ENCODE measurements at regions of chr9 and their contacts with region 1.

Region 1: GRCh38 chr9:12878356-12878978 is 103.6 kb downstream of the LURAP1L start:
- DNase-seq: no peak
- ATAC-seq: no peak
- H3K4me3 ChIP-seq: no peak overlapping the region
- H3K27ac ChIP-seq: no peak overlapping the region
- H3K4me1 ChIP-seq: peaks cover 4 to 5% of the 10 kb centered on the region in 2 donors
- H3K27me3 ChIP-seq: no peaks in the 10 kb centered on the region
- CTCF ChIP-seq: no peak
- POLR2A ChIP-seq: no peak

Region 2: DNA sequence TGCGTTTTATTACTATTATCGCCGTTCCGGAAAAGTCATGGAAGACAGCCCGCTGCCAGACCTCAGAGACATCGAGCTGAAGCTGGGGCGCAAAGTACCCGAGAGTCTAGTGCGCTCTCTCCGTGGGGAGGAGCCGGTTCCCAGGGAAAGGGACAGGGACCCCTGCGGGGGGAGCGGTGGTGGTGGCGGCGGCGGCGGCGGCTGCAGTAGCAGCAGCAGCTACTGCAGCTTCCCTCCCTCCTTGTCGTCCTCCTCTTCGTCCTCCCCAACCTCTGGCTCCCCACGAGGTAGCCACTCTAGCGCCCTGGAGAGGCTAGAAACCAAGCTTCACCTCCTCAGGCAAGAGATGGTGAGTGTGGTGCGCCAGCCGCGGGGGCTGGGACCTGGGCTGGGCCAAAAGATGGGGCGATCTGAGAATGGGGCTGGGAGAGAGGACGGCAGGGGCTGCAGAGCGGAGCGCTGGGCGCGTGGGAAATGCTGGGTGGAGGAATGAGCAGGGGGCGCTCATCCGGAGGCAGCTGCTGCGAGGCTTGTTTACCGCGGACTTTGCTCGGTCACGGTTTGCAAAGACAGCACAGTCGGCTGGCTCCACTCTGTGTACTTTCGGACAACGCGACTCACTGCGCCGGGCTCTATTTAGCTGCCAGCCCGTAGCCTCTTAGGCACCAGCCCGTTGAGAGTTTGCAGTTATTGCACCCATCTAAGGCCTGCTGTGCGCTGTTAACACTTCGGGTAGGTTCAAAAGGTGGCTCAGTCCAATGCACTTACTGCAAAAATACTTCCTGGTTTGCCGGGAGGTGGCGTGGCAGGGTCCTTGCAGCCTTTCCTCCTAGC is 102.6 kb before region 1 on chr9:
- in situ Hi-C with region 1: no loop called
- intact Hi-C with region 1: loop called (anchors 10 kb)
- DNase-seq: peak in 1 of 2 donors; percentile 13
- ATAC-seq: peak; percentile 72 to 78
- H3K4me3 ChIP-seq: peak overlapping the region; percentile 67 to 85 (median 76)
- H3K27ac ChIP-seq: peak overlapping the region; percentile 71 to 83 (median 78)
- H3K4me1 ChIP-seq: peaks cover 5 to 8% of the 10 kb centered on the region in 2 donors
- H3K27me3 ChIP-seq: no peaks in the 10 kb centered on the region
- CTCF ChIP-seq: peak in 2 of 5 experiments; percentile 42 to 44
- POLR2A ChIP-seq: peak in 1 of 2 donors; percentile 26